ENCODE measurements at regions of chr17 and their contacts with region 1.

Region 1: GRCh38 chr17:55527540-55528118 is 16.4 kb upstream of the SMIM36 start:
- DNase-seq: peak; percentile 38 to 66 (median 52)
- H3K4me3 ChIP-seq: no peak overlapping the region
- H3K27ac ChIP-seq: no peak overlapping the region
- H3K4me1 ChIP-seq: no peaks in the 10 kb centered on the region
- H3K27me3 ChIP-seq: no peaks in the 10 kb centered on the region
- CTCF ChIP-seq: peak; percentile 41 to 68 (median 67)
- EP300 ChIP-seq: no peak
- POLR2A ChIP-seq: no peak

Region 2: GRCh38 chr17:55356434-55357328 is 170.9 kb before region 1 on chr17:
- intact Hi-C with region 1: no loop called
- DNase-seq: peak; percentile 32 to 72 (median 43)
- H3K4me3 ChIP-seq: no peak overlapping the region
- H3K27ac ChIP-seq: no peak overlapping the region
- H3K4me1 ChIP-seq: no peaks in the 10 kb centered on the region
- H3K27me3 ChIP-seq: no peaks in the 10 kb centered on the region
- CTCF ChIP-seq: peak; percentile 39 to 44 (median 39)
- EP300 ChIP-seq: no peak
- POLR2A ChIP-seq: no peak

Region 3: DNA sequence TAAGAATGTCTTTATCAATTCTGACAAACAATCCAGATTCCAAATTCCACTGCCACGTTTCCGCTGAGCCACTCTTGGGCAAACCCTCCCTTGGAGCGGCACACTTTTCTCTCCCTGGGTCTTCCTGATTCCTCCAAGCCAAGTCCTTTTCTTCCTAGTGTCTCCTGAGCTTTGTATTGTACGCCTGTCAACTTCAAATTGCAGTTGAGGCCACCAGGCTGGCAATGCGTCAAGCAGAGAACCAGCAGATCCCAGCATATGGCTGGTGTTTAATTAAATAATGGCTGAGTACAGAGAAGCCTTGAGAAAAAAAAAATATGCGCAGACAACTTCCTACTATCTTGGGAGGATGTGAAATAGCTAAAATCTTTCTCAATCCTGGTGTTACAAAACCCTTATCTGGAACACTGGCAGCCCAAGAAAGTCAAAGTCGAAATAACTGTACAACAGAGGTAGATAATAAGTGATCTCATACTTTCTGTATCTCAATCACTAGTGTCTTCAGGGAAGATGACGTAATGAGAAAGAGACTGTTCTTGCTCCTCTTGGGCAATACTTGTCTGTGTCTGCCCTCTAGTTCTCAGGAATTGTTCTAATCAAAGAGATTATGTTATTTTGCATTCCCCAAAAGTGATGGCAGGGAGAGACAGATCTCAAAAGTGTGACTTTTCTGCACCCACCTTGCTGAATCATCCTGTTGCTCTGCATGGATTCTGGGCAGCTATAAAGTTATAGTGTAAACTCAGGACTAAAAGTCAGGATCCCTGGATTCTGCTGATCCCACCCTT is 31.3 kb before region 1 on chr17:
- intact Hi-C with region 1: no loop called
- DNase-seq: no peak
- H3K4me3 ChIP-seq: no peak overlapping the region
- H3K27ac ChIP-seq: no peak overlapping the region
- H3K4me1 ChIP-seq: no peaks in the 10 kb centered on the region
- H3K27me3 ChIP-seq: no peaks in the 10 kb centered on the region
- CTCF ChIP-seq: no peak
- EP300 ChIP-seq: no peak
- POLR2A ChIP-seq: no peak

Region 4: GRCh38 chr17:55641676-55642081 is 114.0 kb after region 1 on chr17:
- intact Hi-C with region 1: loop called in 3 of 4 experiments (anchors 5 to 10 kb)
- DNase-seq: peak; percentile 82 to 91 (median 87)
- H3K4me3 ChIP-seq: no peak overlapping the region
- H3K27ac ChIP-seq: peak overlapping the region in 1 of 2 donors; percentile 27
- H3K4me1 ChIP-seq: no peaks in the 10 kb centered on the region
- H3K27me3 ChIP-seq: no peaks in the 10 kb centered on the region
- CTCF ChIP-seq: peak; percentile 35 to 67 (median 66)
- EP300 ChIP-seq: no peak
- POLR2A ChIP-seq: no peak

Region 5: GRCh38 chr17:55717898-55718735 is 190.5 kb after region 1 on chr17:
- intact Hi-C with region 1: loop called (anchors 5 kb)
- DNase-seq: peak; percentile 74 to 89 (median 83)
- H3K4me3 ChIP-seq: no peak overlapping the region
- H3K27ac ChIP-seq: no peak overlapping the region
- H3K4me1 ChIP-seq: no peaks in the 10 kb centered on the region
- H3K27me3 ChIP-seq: no peaks in the 10 kb centered on the region
- CTCF ChIP-seq: peak; percentile 66 to 74 (median 69)
- EP300 ChIP-seq: no peak
- POLR2A ChIP-seq: no peak

Region 6: GRCh38 chr17:55735731-55736405 is 208.2 kb after region 1 on chr17:
- intact Hi-C with region 1: loop called in 1 of 4 experiments (anchors 5 kb)
- DNase-seq: peak in 3 of 5 donors; percentile 30 to 55 (median 35)
- H3K4me3 ChIP-seq: no peak overlapping the region
- H3K27ac ChIP-seq: no peak overlapping the region
- H3K4me1 ChIP-seq: no peaks in the 10 kb centered on the region
- H3K27me3 ChIP-seq: no peaks in the 10 kb centered on the region
- CTCF ChIP-seq: peak in 2 of 3 donors; percentile 48 to 60
- EP300 ChIP-seq: no peak
- POLR2A ChIP-seq: no peak

Region 7: GRCh38 chr17:55770148-55770870 is 242.7 kb after region 1 on chr17:
- intact Hi-C with region 1: loop called (anchors 2 to 10 kb)
- DNase-seq: no peak
- H3K4me3 ChIP-seq: no peak overlapping the region
- H3K27ac ChIP-seq: no peak overlapping the region
- H3K4me1 ChIP-seq: no peaks in the 10 kb centered on the region
- H3K27me3 ChIP-seq: no peaks in the 10 kb centered on the region
- CTCF ChIP-seq: peak in 2 of 3 donors; percentile 69 to 75
- EP300 ChIP-seq: no peak
- POLR2A ChIP-seq: no peak

Region 8: DNA sequence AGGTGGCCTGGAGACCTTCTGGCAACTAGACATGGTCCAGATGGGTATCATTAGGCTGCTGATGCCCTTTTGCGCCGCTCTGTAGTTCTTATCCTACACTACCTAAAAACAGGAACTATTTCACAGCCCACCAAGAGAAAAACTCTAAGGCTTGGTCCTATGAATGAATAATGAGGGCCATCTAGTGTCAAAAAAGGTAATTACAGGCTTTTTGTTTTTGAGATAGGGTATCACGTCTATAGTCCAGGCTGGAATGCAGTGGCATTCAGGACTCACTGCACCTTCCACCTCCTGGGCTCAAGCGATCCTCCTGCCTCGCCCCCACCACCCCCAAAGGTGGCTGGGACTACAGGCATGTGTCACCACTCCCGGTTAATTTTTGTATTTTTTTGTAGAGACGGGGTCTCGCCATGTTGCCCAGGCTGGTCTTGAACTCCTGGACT is 1412.3 kb after region 1 on chr17:
- intact Hi-C with region 1: loop called in 1 of 4 experiments (anchors 5 kb)
- DNase-seq: no peak
- H3K4me3 ChIP-seq: no peak overlapping the region
- H3K27ac ChIP-seq: no peak overlapping the region
- H3K4me1 ChIP-seq: no peaks in the 10 kb centered on the region
- H3K27me3 ChIP-seq: no peaks in the 10 kb centered on the region
- CTCF ChIP-seq: peak in 2 of 3 donors; percentile 38 to 43
- EP300 ChIP-seq: no peak
- POLR2A ChIP-seq: no peak

Measured in ovary (tissue), 10 donors.